ENCODE measurements at regions of chr7 and their contacts with region 1.

Region 1: DNA sequence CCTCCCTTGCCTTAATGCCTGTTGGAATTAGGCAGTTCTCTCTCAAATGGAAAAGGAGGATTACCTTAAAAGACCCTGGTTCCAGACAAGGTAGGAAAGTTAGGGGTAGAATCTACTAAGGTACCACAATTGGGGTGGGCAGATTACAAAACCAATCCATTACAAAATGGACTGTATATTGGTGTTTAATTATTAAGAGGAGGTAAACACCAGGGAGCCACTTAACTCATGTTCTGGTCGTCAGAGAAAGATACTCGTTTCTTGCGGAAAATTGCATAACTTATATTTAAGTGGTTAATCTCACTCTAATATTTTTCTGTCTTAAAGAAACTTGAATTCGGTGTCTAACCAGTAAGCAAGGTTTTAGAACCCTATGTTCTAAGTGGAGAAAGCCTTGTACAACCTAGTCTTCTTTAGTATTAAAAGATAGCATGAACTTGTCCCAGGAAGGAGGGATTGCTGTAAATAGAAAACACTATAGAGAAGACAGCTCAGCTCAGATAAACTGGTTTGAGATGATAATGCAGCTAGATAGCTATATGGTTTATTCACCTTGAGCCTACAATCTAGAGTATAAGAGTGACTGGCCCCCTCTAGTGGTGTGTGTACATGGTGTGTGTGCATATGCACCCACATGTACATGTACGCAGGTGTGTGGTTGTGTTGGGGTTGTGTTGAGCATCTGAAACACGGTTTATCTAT is 58.0 kb upstream of the STRIP2 start:
- DNase-seq: peak; percentile 70
- H3K4me3 ChIP-seq: no peak overlapping the region
- H3K27ac ChIP-seq: no peak overlapping the region
- H3K4me1 ChIP-seq: peaks cover 39% of the 10 kb centered on the region
- H3K27me3 ChIP-seq: no peaks in the 10 kb centered on the region
- CTCF ChIP-seq: peak; percentile 86

Region 2: DNA sequence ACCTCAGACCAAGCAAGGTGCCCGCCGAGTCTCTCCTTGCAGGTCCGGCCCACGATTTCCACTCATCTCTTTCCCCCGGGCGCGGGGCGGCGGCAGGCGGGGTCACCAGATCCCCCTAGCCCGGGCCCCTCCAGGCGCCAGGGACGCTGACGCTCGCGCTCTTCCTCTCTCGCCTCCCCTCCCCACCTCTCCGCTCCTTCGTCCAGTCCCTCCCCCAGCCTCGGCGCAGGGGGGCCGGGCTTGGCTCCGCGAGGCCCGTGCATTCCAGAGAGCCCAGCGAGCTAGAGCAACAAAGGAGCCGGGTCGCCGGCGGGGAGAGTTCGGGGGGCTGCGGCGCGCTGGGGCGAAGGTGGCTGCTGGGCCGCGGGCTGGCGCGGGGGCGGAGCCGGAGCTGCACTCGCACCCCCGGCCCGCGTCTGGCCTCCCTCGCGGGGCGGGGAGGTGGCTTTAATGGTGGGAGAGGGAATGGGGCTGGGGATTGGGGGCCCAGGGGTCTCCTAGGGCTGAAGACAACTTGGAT is 187.8 kb before region 1 on chr7 and contains the start of gene SMO:
- CTCF ChIA-PET with region 1: no interaction called
- POLR2A ChIA-PET with region 1: no interaction called
- intact Hi-C with region 1: no loop called
- DNase-seq: peak; percentile 74
- H3K4me3 ChIP-seq: peak within 1 kb of the TSS; percentile 83
- H3K27ac ChIP-seq: peak within 1 kb of the TSS; percentile 94
- H3K4me1 ChIP-seq: peaks cover 11% of the 10 kb centered on the region
- H3K27me3 ChIP-seq: no peaks in the 10 kb centered on the region
- CTCF ChIP-seq: no peak
- total RNA-seq, gene SMO: 40.3 and 40.8 TPM in 2 replicates

Region 3: DNA sequence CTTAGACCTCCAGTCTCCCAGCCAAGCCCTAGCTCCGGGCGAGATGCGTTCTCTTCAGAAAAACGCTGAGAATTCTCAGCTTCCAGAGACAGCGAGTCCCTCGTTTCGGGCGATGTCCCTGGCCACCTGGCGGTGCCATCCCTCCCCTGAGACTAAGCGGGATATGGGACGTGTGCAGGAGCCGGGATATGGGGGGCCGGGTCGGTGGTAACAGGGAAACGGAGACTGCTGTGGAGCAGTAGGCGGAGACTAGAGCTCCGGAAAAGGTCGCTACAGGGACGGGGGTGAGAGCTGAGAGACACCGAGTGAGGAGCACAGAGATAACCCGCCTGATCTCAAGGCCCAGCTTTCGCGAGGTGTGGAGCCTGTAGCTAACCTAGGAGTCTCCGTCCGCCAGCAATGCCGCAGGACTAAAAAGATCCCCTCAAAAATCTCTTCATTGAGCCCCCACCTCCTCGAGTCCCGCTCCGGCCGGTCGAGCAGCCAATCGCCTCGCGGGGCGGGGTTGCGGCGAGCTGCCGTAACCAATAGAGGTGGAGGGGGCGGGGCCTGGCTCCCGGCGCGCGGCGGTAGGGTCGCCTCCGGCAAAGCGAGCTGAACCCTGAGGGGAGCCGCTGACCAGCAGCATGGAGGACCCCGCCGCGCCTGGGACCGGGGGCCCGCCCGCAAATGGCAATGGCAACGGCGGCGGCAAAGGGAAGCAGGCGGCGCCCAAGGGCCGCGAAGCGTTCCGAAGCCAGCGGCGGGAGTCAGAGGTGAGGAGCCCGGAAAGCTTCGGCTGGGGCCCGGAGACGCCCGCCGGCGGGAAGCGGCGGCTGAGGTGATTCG is 57.8 kb after region 1 on chr7 and contains the start of gene STRIP2:
- CTCF ChIA-PET with region 1: interaction called, 13 read pairs
- POLR2A ChIA-PET with region 1: no interaction called
- intact Hi-C with region 1: no loop called
- DNase-seq: peak; percentile 91
- H3K4me3 ChIP-seq: peak within 1 kb of the TSS; percentile 80
- H3K27ac ChIP-seq: peak within 1 kb of the TSS; percentile 77
- H3K4me1 ChIP-seq: peaks cover 9% of the 10 kb centered on the region
- H3K27me3 ChIP-seq: no peaks in the 10 kb centered on the region
- CTCF ChIP-seq: no peak
- total RNA-seq, gene STRIP2: 9.1 and 10.7 TPM in 2 replicates

Region 4: GRCh38 chr7:129767120-129768015 is 391.1 kb after region 1 on chr7:
- CTCF ChIA-PET with region 1: no interaction called
- POLR2A ChIA-PET with region 1: interaction called, 10 read pairs
- intact Hi-C with region 1: no loop called
- DNase-seq: no peak
- H3K4me3 ChIP-seq: no peak overlapping the region
- H3K27ac ChIP-seq: no peak overlapping the region
- H3K4me1 ChIP-seq: no peaks in the 10 kb centered on the region
- H3K27me3 ChIP-seq: no peaks in the 10 kb centered on the region
- CTCF ChIP-seq: no peak